Endothelial cell of umbilical vein (primary cell): ENCODE measurements at regions of chr5 and their contacts with region 1.

Region 1: DNA sequence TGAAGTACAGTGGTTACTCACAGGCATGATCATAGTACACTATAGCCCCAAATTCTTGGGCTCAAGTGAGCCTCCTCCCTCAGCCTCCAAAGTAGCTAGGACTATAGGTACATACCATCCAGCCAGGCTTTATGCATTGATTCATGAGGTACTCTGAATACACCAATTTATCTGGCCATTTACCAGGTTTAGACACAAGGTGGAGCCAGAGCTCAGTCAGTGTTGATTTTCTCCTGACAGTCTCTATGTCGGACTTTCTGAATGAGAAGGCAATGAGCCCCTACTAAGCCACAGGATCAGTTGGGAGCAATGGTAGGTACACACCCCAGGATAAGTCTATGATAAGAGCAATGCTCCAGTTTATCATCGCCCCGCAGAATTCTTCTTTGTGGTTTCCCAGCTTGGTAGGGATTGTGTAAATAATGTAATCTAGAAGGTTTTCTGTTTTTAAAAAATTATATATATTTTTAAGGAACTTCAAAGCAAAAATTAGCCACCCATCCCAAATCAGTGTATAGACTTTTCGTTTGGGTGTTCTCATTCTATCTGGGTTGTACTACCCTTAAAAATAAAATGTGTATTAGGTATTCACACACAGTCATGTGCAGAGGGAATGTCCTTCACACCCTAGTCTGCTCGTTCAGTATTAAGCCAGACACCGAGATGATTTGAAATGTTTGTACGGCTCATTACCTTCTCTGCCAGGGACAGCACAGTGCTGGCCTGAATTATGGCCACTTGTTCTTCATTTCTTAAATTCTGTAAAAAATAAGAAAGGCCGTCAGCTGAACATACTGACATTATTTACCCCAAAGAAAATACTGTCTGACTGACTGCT is 118.4 kb upstream of the DPYSL3 start:
- DNase-seq: peak; percentile 76
- H3K4me3 ChIP-seq: no peak overlapping the region
- H3K27ac ChIP-seq: no peak overlapping the region
- H3K4me1 ChIP-seq: no peaks in the 10 kb centered on the region
- H3K27me3 ChIP-seq: peaks cover 2% of the 10 kb centered on the region in 2 experiments
- CTCF ChIP-seq: peak; percentile 64 to 66
- POLR2A ChIP-seq: no peak

Region 2: DNA sequence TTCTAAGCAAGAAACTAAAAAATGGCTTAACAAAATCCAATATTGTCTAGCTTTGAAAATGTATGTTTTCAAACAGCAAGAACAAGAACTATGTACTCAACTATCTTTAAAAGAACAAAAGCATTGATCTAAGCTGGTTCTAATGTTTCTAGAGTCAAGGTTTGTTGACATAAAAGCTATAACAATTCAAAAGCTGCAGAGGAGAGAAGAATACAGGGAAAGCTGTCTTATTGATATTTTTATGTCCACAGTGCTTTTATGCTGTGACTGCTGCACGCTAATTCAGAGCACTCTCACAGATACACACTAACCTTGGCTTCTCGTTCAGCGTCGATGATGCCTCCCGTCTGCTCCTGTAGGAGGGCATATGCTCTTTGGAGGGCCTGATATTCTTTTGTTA is 11.0 kb after region 1 on chr5:
- CTCF ChIA-PET with region 1: interaction called, 11 read pairs
- POLR2A ChIA-PET with region 1: no interaction called
- dilution Hi-C with region 1: no loop called
- intact Hi-C with region 1: no loop called
- DNase-seq: no peak
- H3K4me3 ChIP-seq: no peak overlapping the region
- H3K27ac ChIP-seq: no peak overlapping the region
- H3K4me1 ChIP-seq: no peaks in the 10 kb centered on the region
- H3K27me3 ChIP-seq: peaks cover 0 to 4% of the 10 kb centered on the region in 2 experiments
- CTCF ChIP-seq: no peak
- POLR2A ChIP-seq: no peak

Region 3: GRCh38 chr5:147690595-147690994 is 62.3 kb after region 1 on chr5:
- CTCF ChIA-PET with region 1: interaction called, 3 read pairs
- POLR2A ChIA-PET with region 1: no interaction called
- dilution Hi-C with region 1: no loop called
- intact Hi-C with region 1: loop called (anchors 5 kb)
- DNase-seq: no peak
- H3K4me3 ChIP-seq: no peak overlapping the region
- H3K27ac ChIP-seq: no peak overlapping the region
- H3K4me1 ChIP-seq: no peaks in the 10 kb centered on the region
- H3K27me3 ChIP-seq: peaks cover 0 to 4% of the 10 kb centered on the region in 2 experiments
- CTCF ChIP-seq: no peak
- POLR2A ChIP-seq: no peak

Region 4: DNA sequence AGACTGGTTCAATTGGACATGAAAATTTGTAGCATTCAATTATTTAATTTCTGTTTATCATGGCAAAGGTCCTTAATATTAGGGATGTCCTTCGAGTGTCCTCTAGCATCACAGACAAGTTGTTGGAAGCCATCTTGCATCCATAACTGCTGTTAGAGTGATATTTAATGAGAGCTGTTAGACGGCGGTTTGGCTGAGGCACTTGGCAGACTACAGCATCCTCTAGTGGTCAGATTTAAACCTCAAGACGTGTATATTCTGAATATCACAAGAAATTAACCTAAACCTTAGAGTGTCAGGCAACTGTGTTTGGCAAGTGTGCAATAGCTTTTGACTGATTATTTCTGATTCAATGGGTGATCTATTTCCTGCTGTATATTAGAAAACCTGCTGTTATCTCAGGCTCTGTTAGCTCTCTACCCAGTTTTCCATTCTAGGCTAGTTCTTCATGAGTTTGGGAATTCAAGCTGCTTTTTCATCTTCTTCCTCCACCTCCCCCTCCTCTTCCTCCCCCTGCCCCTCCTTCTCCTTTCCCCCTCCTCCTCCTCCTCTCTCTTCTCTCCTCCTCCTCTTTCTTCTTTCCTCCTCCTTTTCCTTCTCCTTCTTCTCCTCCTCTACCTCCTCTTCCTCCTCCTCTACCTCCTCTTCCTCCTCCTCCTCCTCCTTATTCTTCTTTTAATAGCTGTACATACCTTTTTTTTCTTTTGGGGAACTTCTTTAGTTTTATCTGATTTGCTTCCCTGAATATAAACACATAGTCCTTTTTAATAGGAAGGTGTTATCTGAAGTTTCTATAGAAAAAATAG is 194.6 kb after region 1 on chr5:
- CTCF ChIA-PET with region 1: interaction called, 301 read pairs
- POLR2A ChIA-PET with region 1: no interaction called
- dilution Hi-C with region 1: no loop called
- intact Hi-C with region 1: loop called (anchors 1 kb)
- DNase-seq: peak; percentile 70
- H3K4me3 ChIP-seq: no peak overlapping the region
- H3K27ac ChIP-seq: no peak overlapping the region
- H3K4me1 ChIP-seq: no peaks in the 10 kb centered on the region
- H3K27me3 ChIP-seq: peaks cover 4 to 8% of the 10 kb centered on the region in 2 experiments
- CTCF ChIP-seq: peak; percentile 79 to 83
- POLR2A ChIP-seq: no peak

Region 5: GRCh38 chr5:147831465-147831864 is 203.2 kb after region 1 on chr5 and contains the start of gene SPINK1:
- CTCF ChIA-PET with region 1: interaction called, 301 read pairs
- POLR2A ChIA-PET with region 1: no interaction called
- dilution Hi-C with region 1: no loop called
- intact Hi-C with region 1: no loop called
- DNase-seq: no peak
- H3K4me3 ChIP-seq: no peak within 1 kb of the TSS
- H3K27ac ChIP-seq: no peak within 1 kb of the TSS
- H3K4me1 ChIP-seq: no peaks in the 10 kb centered on the region
- H3K27me3 ChIP-seq: peaks cover 0 to 9% of the 10 kb centered on the region in 2 experiments
- CTCF ChIP-seq: no peak
- POLR2A ChIP-seq: no peak
- total RNA-seq, gene SPINK1: not detected in 2 replicates

Region 6: GRCh38 chr5:147935032-147935431 is 306.8 kb after region 1 on chr5:
- CTCF ChIA-PET with region 1: interaction called, 7 read pairs
- POLR2A ChIA-PET with region 1: no interaction called
- dilution Hi-C with region 1: no loop called
- intact Hi-C with region 1: loop called (anchors 1 kb)
- DNase-seq: peak; percentile 77
- H3K4me3 ChIP-seq: no peak overlapping the region
- H3K27ac ChIP-seq: no peak overlapping the region
- H3K4me1 ChIP-seq: no peaks in the 10 kb centered on the region
- H3K27me3 ChIP-seq: no peaks in the 10 kb centered on the region
- CTCF ChIP-seq: peak; percentile 33 to 34
- POLR2A ChIP-seq: no peak

Region 7: GRCh38 chr5:149205625-149206523 is 1577.6 kb after region 1 on chr5:
- CTCF ChIA-PET with region 1: no interaction called
- POLR2A ChIA-PET with region 1: no interaction called
- dilution Hi-C with region 1: no loop called
- intact Hi-C with region 1: no loop called
- DNase-seq: no peak
- H3K4me3 ChIP-seq: no peak overlapping the region
- H3K27ac ChIP-seq: no peak overlapping the region
- H3K4me1 ChIP-seq: peaks cover 21% of the 10 kb centered on the region
- H3K27me3 ChIP-seq: no peaks in the 10 kb centered on the region
- CTCF ChIP-seq: no peak
- POLR2A ChIP-seq: no peak